Dorsolateral prefrontal cortex (tissue), 120 donors: ENCODE measurements at regions of chr1 and their contacts with region 1.

Region 1: DNA sequence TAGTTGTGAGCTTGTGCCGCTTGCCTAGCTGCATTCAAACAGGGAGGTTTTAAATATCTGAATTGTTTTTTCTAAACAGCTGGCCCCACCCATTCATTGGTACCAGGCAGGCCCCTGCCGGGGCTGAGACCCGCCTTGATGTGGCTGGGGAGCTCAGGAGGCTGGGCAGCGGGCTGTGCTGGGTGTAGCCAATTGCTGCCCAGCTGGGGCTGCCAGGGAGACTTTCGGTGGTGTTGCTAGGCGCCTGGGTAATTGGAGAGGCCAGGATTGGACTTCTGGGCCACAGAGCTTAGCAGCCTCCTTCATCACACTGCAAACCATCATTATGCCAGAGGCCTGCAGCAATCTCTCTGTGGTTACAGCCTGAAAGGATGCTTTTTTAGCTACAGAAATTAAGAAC is 12.2 kb downstream of the RHBDL2 start:
- DNase-seq: peak; percentile 18 to 91 (median 86)
- H3K4me3 ChIP-seq: peak overlapping the region in 54 of 59 donors; percentile 1 to 67 (median 44)
- H3K27ac ChIP-seq: peak overlapping the region; percentile 85 to 99 (median 96)
- H3K27me3 ChIP-seq: no peaks in the 10 kb centered on the region
- CTCF ChIP-seq: peak in 8 of 56 donors; percentile 10 to 37 (median 12)

Region 2: GRCh38 chr1:38608202-38608864 is 321.1 kb before region 1 on chr1:
- intact Hi-C with region 1: no loop called
- DNase-seq: no peak
- H3K4me3 ChIP-seq: no peak overlapping the region
- H3K27ac ChIP-seq: no peak overlapping the region
- H3K27me3 ChIP-seq: peaks cover 0 to 9% (median 0%) of the 10 kb centered on the region in 45 donors
- CTCF ChIP-seq: peak in 43 of 56 donors; percentile 13 to 70 (median 39)

Region 3: GRCh38 chr1:38848071-38848470 is 81.4 kb before region 1 on chr1:
- intact Hi-C with region 1: no loop called
- DNase-seq: no peak
- H3K4me3 ChIP-seq: no peak overlapping the region
- H3K27ac ChIP-seq: no peak overlapping the region
- H3K27me3 ChIP-seq: no peaks in the 10 kb centered on the region
- CTCF ChIP-seq: no peak

Region 4: GRCh38 chr1:39026051-39026865 is 96.8 kb after region 1 on chr1 and contains the start of gene NDUFS5:
- intact Hi-C with region 1: loop called in 1 of 2 experiments (anchors 10 kb)
- DNase-seq: peak; percentile 72 to 95 (median 91)
- H3K4me3 ChIP-seq: peak within 1 kb of the TSS; percentile 47 to 97 (median 82)
- H3K27ac ChIP-seq: peak within 1 kb of the TSS; percentile 69 to 98 (median 92)
- H3K27me3 ChIP-seq: no peaks in the 10 kb centered on the region
- CTCF ChIP-seq: peak in 12 of 56 donors; percentile 2 to 23 (median 10)
- total RNA-seq, gene NDUFS5: 129 to 361 (median 263) TPM

Region 5: GRCh38 chr1:39183503-39184353 is 254.3 kb after region 1 on chr1:
- intact Hi-C with region 1: loop called in 1 of 2 experiments (anchors 10 kb)
- DNase-seq: peak in 4 of 10 donors; percentile 46 to 65 (median 54)
- H3K4me3 ChIP-seq: no peak overlapping the region
- H3K27ac ChIP-seq: peak overlapping the region in 41 of 59 donors; percentile 0 to 73 (median 37)
- H3K27me3 ChIP-seq: no peaks in the 10 kb centered on the region
- CTCF ChIP-seq: peak in 50 of 56 donors; percentile 18 to 55 (median 39)